Activated B cell treated with CpG ODN at 0.5 μM for 24 hours (primary cell): ENCODE measurements at regions of chr19 and their contacts with region 1.

Region 1: GRCh38 chr19:53195265-53195903 is 2.2 kb upstream of the ZNF665 start:
- DNase-seq: peak; percentile 50
- ATAC-seq: peak; percentile 48
- H3K4me3 Mint-ChIP-seq: peak overlapping the region; percentile 39
- H3K27ac Mint-ChIP-seq: peak overlapping the region; percentile 30
- H3K4me1 Mint-ChIP-seq: peaks cover 41% of the 10 kb centered on the region
- H3K27me3 Mint-ChIP-seq: no peaks in the 10 kb centered on the region
- CTCF ChIP-seq: no peak

Region 2: DNA sequence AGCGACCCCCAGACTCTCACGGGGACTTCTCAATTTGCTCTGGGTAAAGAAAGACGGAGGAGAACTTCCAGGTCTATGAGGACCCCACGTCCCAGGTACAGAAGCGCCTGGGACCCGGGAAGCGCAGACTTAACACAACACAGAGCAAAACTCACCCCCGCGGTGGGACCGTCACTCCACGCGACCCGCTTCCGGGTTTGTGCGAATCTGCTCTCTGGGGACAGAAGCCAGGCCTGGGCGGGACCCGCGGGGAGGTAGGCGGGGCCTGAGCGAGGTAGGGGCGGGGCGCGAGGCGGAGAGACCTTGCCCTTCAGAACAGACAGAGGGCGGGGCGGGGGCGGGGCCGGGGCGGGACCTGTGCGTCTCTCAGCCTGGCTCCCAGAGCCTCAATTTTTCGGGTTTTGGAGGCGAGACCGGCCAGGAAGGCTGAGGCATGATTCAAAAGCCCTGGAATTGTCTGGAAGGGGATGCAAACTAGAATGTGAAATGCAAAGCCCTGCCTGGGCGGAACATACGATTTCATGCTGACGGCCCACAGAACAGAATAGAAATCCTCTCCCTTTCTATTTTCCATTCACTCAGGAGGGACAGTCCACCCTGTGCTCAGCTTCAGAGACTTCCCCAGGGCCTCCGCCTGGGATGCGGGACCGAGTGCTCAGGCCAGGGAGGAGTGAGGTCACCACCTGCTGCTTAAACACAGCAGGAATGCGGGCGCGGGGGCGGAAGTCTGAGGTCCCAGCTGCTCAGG is 252.8 kb before region 1 on chr19:
- CTCF ChIA-PET with region 1: no interaction called
- POLR2A ChIA-PET with region 1: no interaction called
- intact Hi-C with region 1: loop called (anchors 5 kb)
- DNase-seq: peak; percentile 98
- ATAC-seq: peak; percentile 99
- H3K4me3 Mint-ChIP-seq: peak overlapping the region; percentile 96
- H3K27ac Mint-ChIP-seq: peak overlapping the region; percentile 92
- H3K4me1 Mint-ChIP-seq: peaks cover 31% of the 10 kb centered on the region
- H3K27me3 Mint-ChIP-seq: no peaks in the 10 kb centered on the region
- CTCF ChIP-seq: no peak

Region 3: GRCh38 chr19:53254411-53255341 is 59.3 kb after region 1 on chr19 and contains the start of gene ZNF677:
- CTCF ChIA-PET with region 1: no interaction called
- POLR2A ChIA-PET with region 1: interaction called, 3 read pairs
- intact Hi-C with region 1: loop called (anchors 5 kb)
- DNase-seq: peak; percentile 57
- ATAC-seq: peak; percentile 99
- H3K4me3 Mint-ChIP-seq: peak within 1 kb of the TSS; percentile 87
- H3K27ac Mint-ChIP-seq: peak within 1 kb of the TSS; percentile 77
- H3K4me1 Mint-ChIP-seq: peaks cover 12% of the 10 kb centered on the region
- H3K27me3 Mint-ChIP-seq: no peaks in the 10 kb centered on the region
- CTCF ChIP-seq: no peak
- total RNA-seq, gene ZNF677: 13.7 and 14.2 TPM in 2 replicates

Region 4: GRCh38 chr19:53365134-53365898 is 169.9 kb after region 1 on chr19 and contains the start of gene ZNF525:
- CTCF ChIA-PET with region 1: interaction called, 8 read pairs
- POLR2A ChIA-PET with region 1: no interaction called
- intact Hi-C with region 1: loop called (anchors 1 kb)
- DNase-seq: peak; percentile 98
- ATAC-seq: peak; percentile 99
- H3K4me3 Mint-ChIP-seq: peak within 1 kb of the TSS; percentile 96
- H3K27ac Mint-ChIP-seq: peak within 1 kb of the TSS; percentile 98
- H3K4me1 Mint-ChIP-seq: peaks cover 34% of the 10 kb centered on the region
- H3K27me3 Mint-ChIP-seq: no peaks in the 10 kb centered on the region
- CTCF ChIP-seq: no peak
- total RNA-seq, gene ZNF525: 28.9 and 37.4 TPM in 2 replicates

Region 5: GRCh38 chr19:53431399-53432087 is 236.2 kb after region 1 on chr19 and contains the start of gene ZNF761:
- CTCF ChIA-PET with region 1: no interaction called
- POLR2A ChIA-PET with region 1: no interaction called
- intact Hi-C with region 1: loop called (anchors 1 kb)
- DNase-seq: peak; percentile 99
- ATAC-seq: peak; percentile 98
- H3K4me3 Mint-ChIP-seq: peak within 1 kb of the TSS; percentile 96
- H3K27ac Mint-ChIP-seq: peak within 1 kb of the TSS; percentile 94
- H3K4me1 Mint-ChIP-seq: peaks cover 34% of the 10 kb centered on the region
- H3K27me3 Mint-ChIP-seq: no peaks in the 10 kb centered on the region
- CTCF ChIP-seq: no peak
- total RNA-seq, gene ZNF761: 11.1 and 13.8 TPM in 2 replicates

Region 6: GRCh38 chr19:53511933-53512374 is 316.6 kb after region 1 on chr19:
- CTCF ChIA-PET with region 1: interaction called, 10 read pairs
- POLR2A ChIA-PET with region 1: interaction called, 4 read pairs
- intact Hi-C with region 1: loop called (anchors 1 kb)
- DNase-seq: peak; percentile 28
- ATAC-seq: peak; percentile 84
- H3K4me3 Mint-ChIP-seq: no peak overlapping the region
- H3K27ac Mint-ChIP-seq: no peak overlapping the region
- H3K4me1 Mint-ChIP-seq: peaks cover 2% of the 10 kb centered on the region
- H3K27me3 Mint-ChIP-seq: peaks cover 7% of the 10 kb centered on the region
- CTCF ChIP-seq: no peak

Region 7: GRCh38 chr19:54102421-54103169 is 907.2 kb after region 1 on chr19 and contains the start of gene NDUFA3:
- CTCF ChIA-PET with region 1: no interaction called
- POLR2A ChIA-PET with region 1: no interaction called
- intact Hi-C with region 1: loop called (anchors 5 kb)
- DNase-seq: peak; percentile 93
- ATAC-seq: peak; percentile 97
- H3K4me3 Mint-ChIP-seq: peak within 1 kb of the TSS; percentile 99
- H3K27ac Mint-ChIP-seq: peak within 1 kb of the TSS; percentile 93
- H3K4me1 Mint-ChIP-seq: peaks cover 15% of the 10 kb centered on the region
- H3K27me3 Mint-ChIP-seq: no peaks in the 10 kb centered on the region
- CTCF ChIP-seq: no peak
- total RNA-seq, gene NDUFA3: 94.7 and 96.1 TPM in 2 replicates